A549 (cell line): ENCODE measurements at regions of chr15 and their contacts with region 1.

Region 1: GRCh38 chr15:60585743-60586708 is 107.1 kb upstream of the ICE2 start:
- DNase-seq: peak; percentile 75 to 79
- ATAC-seq: peak; percentile 54 to 85; a peak in 4 of 6 replicates
- H3K4me3 ChIP-seq: no peak overlapping the region
- H3K27ac ChIP-seq: no peak overlapping the region
- H3K4me1 ChIP-seq: peaks cover 4% of the 10 kb centered on the region; the same call in 1 of the 3 replicates
- CTCF ChIP-seq: peak; percentile 99
- EP300 ChIP-seq: no peak
- POLR2A ChIP-seq: no peak
- RAD21 ChIP-seq: peak; percentile 96 to 97

Region 2: DNA sequence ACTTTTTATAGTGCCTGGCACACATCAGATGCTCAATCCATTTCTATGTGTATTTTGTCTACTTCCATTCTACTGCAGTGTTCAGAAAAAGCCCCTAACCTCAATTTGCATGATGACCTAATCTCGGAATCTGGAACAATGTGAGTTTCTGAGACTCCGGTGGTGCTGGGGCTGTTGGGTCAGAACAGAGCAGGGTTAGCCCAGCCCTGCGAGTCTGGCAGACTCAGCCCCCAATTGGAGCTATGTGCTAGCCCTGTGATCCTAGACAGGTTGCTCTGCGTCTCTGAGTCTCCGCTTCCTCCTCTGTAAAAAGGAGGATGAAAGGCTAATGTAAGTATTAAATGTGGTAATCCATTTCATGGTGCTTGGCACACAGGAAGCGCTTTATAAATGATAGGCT is 12.1 kb before region 1 on chr15:
- CTCF ChIA-PET with region 1: interaction called, 21 read pairs
- POLR2A ChIA-PET with region 1: no interaction called
- DNase-seq: no peak
- ATAC-seq: no peak
- H3K4me3 ChIP-seq: no peak overlapping the region
- H3K27ac ChIP-seq: no peak overlapping the region
- H3K4me1 ChIP-seq: peaks cover 19% of the 10 kb centered on the region
- CTCF ChIP-seq: no peak
- EP300 ChIP-seq: no peak
- POLR2A ChIP-seq: no peak
- RAD21 ChIP-seq: no peak

Region 3: DNA sequence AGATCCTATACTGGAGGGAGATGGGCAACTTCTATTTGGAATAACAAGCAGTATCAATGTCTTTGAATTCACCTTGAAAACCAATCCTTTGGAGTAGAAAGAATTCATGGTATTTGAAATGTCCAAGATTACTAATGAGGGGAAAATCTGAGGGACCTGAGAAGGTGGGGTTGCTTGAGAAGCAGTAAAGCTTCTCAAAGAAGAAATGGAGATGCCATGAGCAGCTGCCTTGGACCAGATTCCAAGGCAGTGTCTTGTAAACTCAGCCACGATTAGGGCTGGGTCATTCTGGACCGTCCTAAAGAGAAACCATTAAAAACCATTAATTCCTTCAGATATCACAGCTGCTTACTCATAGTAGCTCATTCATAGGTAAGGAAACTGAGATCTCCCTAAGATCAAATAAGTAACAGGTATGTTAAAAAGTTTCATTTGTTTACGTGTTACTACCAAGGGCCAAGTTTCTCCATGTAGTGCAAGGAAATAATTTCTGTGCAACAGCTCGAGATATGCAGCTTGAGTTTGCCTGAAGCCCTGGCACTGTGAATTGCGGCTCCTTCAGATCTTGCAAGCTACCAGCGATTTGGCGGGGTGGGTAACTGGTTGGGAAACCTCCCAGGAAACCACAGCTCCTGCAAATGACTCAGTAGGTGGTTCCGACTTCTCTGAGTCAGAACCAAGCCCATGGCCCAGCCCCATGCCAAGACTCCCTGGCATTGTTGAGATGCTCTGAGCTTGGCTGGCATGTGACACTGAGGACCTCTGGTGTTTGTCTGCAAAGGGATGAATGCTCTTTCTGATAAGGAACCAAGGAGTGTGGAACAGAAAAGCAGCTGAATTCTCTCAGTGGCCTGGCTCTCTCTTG is 346.3 kb after region 1 on chr15:
- CTCF ChIA-PET with region 1: interaction called, 12 read pairs
- POLR2A ChIA-PET with region 1: no interaction called
- DNase-seq: peak; percentile 35 to 58
- ATAC-seq: peak; percentile 75 to 78
- H3K4me3 ChIP-seq: no peak overlapping the region
- H3K27ac ChIP-seq: no peak overlapping the region
- H3K4me1 ChIP-seq: no peaks in the 10 kb centered on the region
- CTCF ChIP-seq: 0 out of 3 replicates have a peak, but pooled peaks have one; percentile 22
- EP300 ChIP-seq: no peak
- POLR2A ChIP-seq: no peak
- RAD21 ChIP-seq: peak; percentile 38 to 40